ENCODE measurements at regions of chr17 and their contacts with region 1.

Region 1: GRCh38 chr17:74379495-74380085 is 12.3 kb downstream of the GPR142 start:
- DNase-seq: peak; percentile 96
- H3K4me3 Mint-ChIP-seq: no peak overlapping the region
- H3K27ac Mint-ChIP-seq: no peak overlapping the region
- H3K4me1 Mint-ChIP-seq: no peaks in the 10 kb centered on the region
- H3K27me3 Mint-ChIP-seq: no peaks in the 10 kb centered on the region

Region 2: GRCh38 chr17:74429604-74430384 is 50.2 kb after region 1 on chr17:
- CTCF ChIA-PET with region 1: no interaction called
- intact Hi-C with region 1: no loop called
- DNase-seq: no peak
- H3K4me3 Mint-ChIP-seq: no peak overlapping the region
- H3K27ac Mint-ChIP-seq: no peak overlapping the region
- H3K4me1 Mint-ChIP-seq: peaks cover 14% of the 10 kb centered on the region
- H3K27me3 Mint-ChIP-seq: peaks cover 47% of the 10 kb centered on the region

Region 3: GRCh38 chr17:74446551-74447500 is 67.2 kb after region 1 on chr17:
- CTCF ChIA-PET with region 1: interaction called, 10 read pairs
- intact Hi-C with region 1: no loop called
- DNase-seq: peak; percentile 29
- H3K4me3 Mint-ChIP-seq: no peak overlapping the region
- H3K27ac Mint-ChIP-seq: no peak overlapping the region
- H3K4me1 Mint-ChIP-seq: peaks cover 2% of the 10 kb centered on the region
- H3K27me3 Mint-ChIP-seq: peaks cover 9% of the 10 kb centered on the region

Region 4: GRCh38 chr17:74528491-74529199 is 149.1 kb after region 1 on chr17:
- CTCF ChIA-PET with region 1: interaction called, 12 read pairs
- intact Hi-C with region 1: no loop called
- DNase-seq: no peak
- H3K4me3 Mint-ChIP-seq: no peak overlapping the region
- H3K27ac Mint-ChIP-seq: no peak overlapping the region
- H3K4me1 Mint-ChIP-seq: peaks cover 2% of the 10 kb centered on the region
- H3K27me3 Mint-ChIP-seq: peaks cover 26% of the 10 kb centered on the region

Measured in activated naive CD4-positive, alpha-beta T cell treated with anti-CD3 and anti-CD28 coated beads for 36 hours (primary cell).